Activated CD8-positive, alpha-beta T cell treated with anti-CD3 and anti-CD28 coated beads, Interleukin-2, amount 10 ng/mL, durations not matched to agents 7 days and 5 days (primary cell): ENCODE measurements at regions of chr10 and their contacts with region 1.

Region 1: GRCh38 chr10:112137154-112137987 is 46.2 kb downstream of the GPAM start:
- DNase-seq: peak; percentile 74
- ATAC-seq: peak; percentile 57
- H3K4me3 Mint-ChIP-seq: no peak overlapping the region
- H3K27ac Mint-ChIP-seq: no peak overlapping the region
- H3K4me1 Mint-ChIP-seq: peaks cover 4% of the 10 kb centered on the region
- H3K27me3 Mint-ChIP-seq: peaks cover 5% of the 10 kb centered on the region

Region 2: DNA sequence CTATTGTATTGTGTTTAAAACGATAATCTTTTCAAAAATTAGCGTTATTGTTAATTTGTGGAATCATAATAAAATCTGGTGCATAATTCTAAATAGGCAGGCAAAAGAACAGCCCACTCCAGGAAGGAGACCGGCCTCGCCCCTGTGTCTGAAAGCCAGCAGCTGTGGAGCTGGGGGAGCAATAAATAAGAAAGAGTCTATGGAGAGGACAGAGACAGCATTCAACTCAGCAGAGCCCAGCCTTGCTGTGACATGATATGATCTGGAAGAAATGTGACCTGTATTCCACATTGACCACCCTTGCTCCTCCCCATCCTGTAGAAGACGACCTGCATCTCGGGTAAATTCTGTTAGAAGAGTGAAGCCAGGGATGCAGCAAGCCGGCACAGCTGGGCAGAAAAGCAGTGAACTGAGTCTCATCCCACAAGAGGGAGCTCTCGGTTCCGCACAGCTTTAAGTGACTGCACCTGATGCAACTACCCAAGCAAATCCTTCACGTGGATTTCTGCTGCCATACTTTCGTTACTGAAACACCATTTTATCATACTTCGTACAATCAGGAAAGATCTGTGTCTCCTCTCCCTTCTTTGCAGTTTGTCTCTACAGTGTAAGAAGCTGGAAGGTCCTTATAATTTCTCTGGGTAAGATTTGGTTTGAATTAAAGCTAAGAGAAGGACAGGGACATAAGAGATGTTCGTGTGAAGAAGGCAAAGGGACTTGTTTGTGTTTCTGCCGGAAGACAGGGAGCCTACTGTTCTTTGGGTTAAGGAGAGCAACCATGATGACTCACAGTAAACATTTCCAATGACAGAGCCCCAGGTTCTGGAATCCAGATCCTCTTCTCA is 380.9 kb before region 1 on chr10:
- CTCF ChIA-PET with region 1: interaction called, 14 read pairs
- POLR2A ChIA-PET with region 1: no interaction called
- DNase-seq: peak; percentile 25
- ATAC-seq: no peak
- H3K4me3 Mint-ChIP-seq: no peak overlapping the region
- H3K27ac Mint-ChIP-seq: no peak overlapping the region
- H3K4me1 Mint-ChIP-seq: no peaks in the 10 kb centered on the region
- H3K27me3 Mint-ChIP-seq: no peaks in the 10 kb centered on the region

Region 3: DNA sequence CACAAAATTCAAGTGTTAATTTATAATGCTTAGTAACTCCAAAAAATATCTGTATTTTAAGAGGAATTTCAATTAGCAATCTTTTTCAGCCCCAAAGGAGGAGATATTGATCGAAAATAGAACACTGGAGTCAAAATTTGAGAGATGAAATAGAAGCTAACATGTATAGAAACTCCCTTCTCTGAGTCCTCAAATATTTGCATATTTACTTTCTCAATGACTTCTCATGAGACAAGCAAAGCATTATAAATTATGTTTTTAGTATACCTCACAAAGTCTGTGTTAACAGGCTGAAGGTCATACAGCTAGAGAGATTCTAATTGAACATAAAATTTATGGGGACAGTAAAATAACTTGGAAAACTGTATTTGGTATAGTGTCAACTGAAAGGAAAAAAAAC is 214.3 kb before region 1 on chr10:
- CTCF ChIA-PET with region 1: no interaction called
- POLR2A ChIA-PET with region 1: no interaction called
- DNase-seq: no peak
- ATAC-seq: no peak
- H3K4me3 Mint-ChIP-seq: no peak overlapping the region
- H3K27ac Mint-ChIP-seq: no peak overlapping the region
- H3K4me1 Mint-ChIP-seq: no peaks in the 10 kb centered on the region
- H3K27me3 Mint-ChIP-seq: no peaks in the 10 kb centered on the region

Region 4: DNA sequence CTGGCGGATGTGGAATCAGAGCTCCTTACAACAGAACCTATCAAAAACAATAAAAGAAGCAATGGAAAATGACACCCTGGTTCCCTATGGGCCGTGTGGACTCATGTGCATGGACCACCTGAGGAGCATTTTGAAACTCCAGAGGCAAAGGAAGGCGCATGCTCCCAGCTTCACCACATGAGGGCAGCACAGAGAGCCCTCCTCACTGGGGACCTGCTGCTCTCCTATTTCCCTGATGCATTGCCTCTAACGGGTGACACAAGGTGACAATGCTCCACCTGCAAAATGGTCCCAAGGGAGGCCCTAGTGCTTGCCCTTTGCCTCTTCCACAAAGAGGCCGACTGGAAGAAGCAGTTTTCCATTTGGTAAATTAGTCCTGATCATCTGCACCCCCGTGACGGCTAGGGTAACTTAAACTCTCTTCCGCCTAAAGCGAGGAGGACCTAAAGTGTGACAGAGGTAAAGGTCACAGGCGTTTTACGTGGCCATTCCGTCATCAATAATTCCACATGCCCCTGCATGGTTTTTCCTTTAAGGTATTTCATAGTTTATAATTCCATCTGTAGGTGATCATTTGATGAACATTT is 21.5 kb before region 1 on chr10:
- CTCF ChIA-PET with region 1: interaction called, 30 read pairs
- POLR2A ChIA-PET with region 1: no interaction called
- DNase-seq: peak; percentile 56
- ATAC-seq: peak; percentile 57
- H3K4me3 Mint-ChIP-seq: no peak overlapping the region
- H3K27ac Mint-ChIP-seq: no peak overlapping the region
- H3K4me1 Mint-ChIP-seq: no peaks in the 10 kb centered on the region
- H3K27me3 Mint-ChIP-seq: no peaks in the 10 kb centered on the region

Region 5: GRCh38 chr10:112151524-112152039 is 14.2 kb after region 1 on chr10:
- CTCF ChIA-PET with region 1: interaction called, 29 read pairs
- POLR2A ChIA-PET with region 1: no interaction called
- DNase-seq: no peak
- ATAC-seq: no peak
- H3K4me3 Mint-ChIP-seq: no peak overlapping the region
- H3K27ac Mint-ChIP-seq: no peak overlapping the region
- H3K4me1 Mint-ChIP-seq: no peaks in the 10 kb centered on the region
- H3K27me3 Mint-ChIP-seq: no peaks in the 10 kb centered on the region

Region 6: GRCh38 chr10:112182784-112183328 is 45.5 kb after region 1 on chr10:
- CTCF ChIA-PET with region 1: interaction called, 23 read pairs
- POLR2A ChIA-PET with region 1: no interaction called
- DNase-seq: no peak
- ATAC-seq: no peak
- H3K4me3 Mint-ChIP-seq: peak overlapping the region; percentile 84
- H3K27ac Mint-ChIP-seq: peak overlapping the region; percentile 94
- H3K4me1 Mint-ChIP-seq: peaks cover 20% of the 10 kb centered on the region
- H3K27me3 Mint-ChIP-seq: peaks cover 2% of the 10 kb centered on the region

Region 7: GRCh38 chr10:112244197-112244596 is 106.8 kb after region 1 on chr10:
- CTCF ChIA-PET with region 1: no interaction called
- POLR2A ChIA-PET with region 1: no interaction called
- DNase-seq: no peak
- ATAC-seq: no peak
- H3K4me3 Mint-ChIP-seq: no peak overlapping the region
- H3K27ac Mint-ChIP-seq: no peak overlapping the region
- H3K4me1 Mint-ChIP-seq: no peaks in the 10 kb centered on the region
- H3K27me3 Mint-ChIP-seq: no peaks in the 10 kb centered on the region

Region 8: GRCh38 chr10:112471878-112472487 is 334.6 kb after region 1 on chr10:
- CTCF ChIA-PET with region 1: interaction called, 11 read pairs
- POLR2A ChIA-PET with region 1: no interaction called
- DNase-seq: no peak
- ATAC-seq: peak; percentile 58
- H3K4me3 Mint-ChIP-seq: no peak overlapping the region
- H3K27ac Mint-ChIP-seq: no peak overlapping the region
- H3K4me1 Mint-ChIP-seq: peaks cover 4% of the 10 kb centered on the region
- H3K27me3 Mint-ChIP-seq: no peaks in the 10 kb centered on the region